ENCODE measurements at regions of chr17 and their contacts with region 1.

Region 1: DNA sequence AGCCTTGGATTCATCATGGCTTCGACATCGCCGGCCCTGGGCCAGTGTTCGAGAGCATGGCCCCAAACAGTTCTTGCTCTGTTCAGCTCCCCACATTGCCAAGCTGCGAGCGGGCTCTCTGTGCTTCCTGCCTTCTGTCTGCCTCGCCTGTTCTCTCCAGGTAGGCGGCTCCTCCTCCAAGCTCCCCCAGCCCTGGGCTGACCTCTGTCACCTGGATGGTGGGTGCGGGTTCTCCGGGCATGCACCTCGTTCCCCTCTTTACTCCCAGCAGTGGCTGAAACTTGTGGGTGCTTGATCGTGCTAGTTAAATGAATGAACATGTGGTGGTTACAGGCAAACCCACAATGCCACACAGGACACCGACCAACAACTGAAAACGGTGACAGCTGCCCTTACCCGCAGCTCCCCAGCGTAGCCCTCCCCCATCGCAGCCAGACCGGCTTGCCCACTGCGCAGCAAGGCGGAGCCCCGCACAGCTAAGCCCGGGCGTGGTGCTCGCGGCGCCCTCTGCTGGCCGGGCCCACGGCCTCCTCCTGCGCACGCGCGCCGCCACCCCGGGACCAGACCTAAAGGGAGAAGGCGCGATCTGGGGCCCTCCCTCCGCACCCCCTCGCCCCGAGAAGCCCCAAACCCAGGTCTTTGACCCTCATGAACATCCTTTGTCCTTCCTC is 23.0 kb upstream of the EIF1 start:
- DNase-seq: peak; percentile 86
- ATAC-seq: peak; percentile 78
- H3K4me3 ChIP-seq: peak overlapping the region; percentile 64
- H3K27ac ChIP-seq: peak overlapping the region; percentile 42
- H3K4me1 ChIP-seq: peaks cover 25% of the 10 kb centered on the region
- H3K27me3 ChIP-seq: no peaks in the 10 kb centered on the region
- CTCF ChIP-seq: peak; percentile 84

Region 2: DNA sequence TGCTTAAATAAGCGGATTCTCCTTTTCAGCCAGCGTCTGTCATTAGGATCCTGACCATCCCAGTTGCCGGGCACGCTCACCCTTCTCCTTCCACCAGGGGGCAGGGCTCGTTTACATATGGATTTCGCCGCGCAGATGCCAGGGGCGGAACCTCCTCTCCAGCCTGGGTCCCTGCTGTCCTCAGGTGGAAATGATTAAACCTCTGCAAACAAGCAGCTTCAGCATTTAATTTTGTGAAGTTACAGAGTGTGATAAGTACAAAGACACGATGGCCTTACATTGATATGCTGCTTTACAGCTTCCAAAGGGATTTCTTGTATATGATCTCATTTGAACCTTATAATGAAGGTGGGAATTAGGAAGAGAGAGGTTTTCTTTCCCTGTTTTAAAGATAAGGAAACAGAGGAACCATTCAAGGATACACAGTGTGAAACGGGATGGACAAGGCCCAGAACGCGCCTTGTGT is 862.1 kb before region 1 on chr17:
- CTCF ChIA-PET with region 1: interaction called, 4 read pairs
- POLR2A ChIA-PET with region 1: no interaction called
- intact Hi-C with region 1: loop called (anchors 2 kb)
- DNase-seq: peak; percentile 82
- ATAC-seq: peak; percentile 85
- H3K4me3 ChIP-seq: no peak overlapping the region
- H3K27ac ChIP-seq: peak overlapping the region; percentile 31; the same call in 1 of the 2 replicates
- H3K4me1 ChIP-seq: peaks cover 8% of the 10 kb centered on the region
- H3K27me3 ChIP-seq: no peaks in the 10 kb centered on the region
- CTCF ChIP-seq: peak; percentile 86

Region 3: DNA sequence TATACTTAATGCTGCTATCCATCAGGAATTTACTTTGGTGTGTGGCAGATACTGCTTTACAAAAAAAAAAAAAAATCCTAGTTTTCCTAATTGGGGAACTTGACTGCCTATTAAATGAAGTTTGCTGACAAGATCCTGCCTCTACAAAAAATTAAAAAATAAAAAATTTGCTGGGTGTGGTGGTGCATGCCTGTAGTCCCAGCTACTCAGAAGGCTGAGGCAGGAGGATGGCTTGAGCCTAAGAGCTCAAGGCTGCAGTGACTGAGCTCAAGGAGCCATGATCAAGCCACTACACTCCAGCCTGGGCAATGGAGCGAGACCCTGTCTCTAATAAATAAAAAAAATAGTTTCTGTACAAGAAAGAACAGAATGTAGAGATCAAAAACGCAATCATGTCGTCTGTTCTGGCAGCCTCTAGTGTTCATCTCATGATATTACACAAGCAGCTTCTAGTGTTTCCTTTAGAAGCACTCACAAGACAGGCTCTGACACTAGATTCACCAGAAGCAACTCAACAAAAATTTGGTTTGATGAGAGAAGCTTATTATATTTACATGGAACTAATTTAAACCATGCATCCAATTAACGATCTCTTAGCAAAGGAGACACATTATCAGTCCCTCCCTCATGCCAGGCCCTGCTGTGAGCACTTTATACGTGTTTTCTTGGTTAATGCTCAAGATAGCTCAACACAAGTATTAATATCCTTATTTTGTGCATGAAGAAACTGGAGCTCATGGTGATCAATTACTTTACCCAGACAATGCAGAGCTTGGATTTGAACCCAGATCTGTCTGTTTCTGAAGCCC is 343.4 kb before region 1 on chr17:
- CTCF ChIA-PET with region 1: no interaction called
- POLR2A ChIA-PET with region 1: no interaction called
- intact Hi-C with region 1: loop called (anchors 10 kb)
- DNase-seq: peak; percentile 65
- ATAC-seq: peak; percentile 68; the same call in 1 of the 2 replicates
- H3K4me3 ChIP-seq: no peak overlapping the region
- H3K27ac ChIP-seq: no peak overlapping the region
- H3K4me1 ChIP-seq: no peaks in the 10 kb centered on the region
- H3K27me3 ChIP-seq: no peaks in the 10 kb centered on the region
- CTCF ChIP-seq: peak; percentile 69

Region 4: DNA sequence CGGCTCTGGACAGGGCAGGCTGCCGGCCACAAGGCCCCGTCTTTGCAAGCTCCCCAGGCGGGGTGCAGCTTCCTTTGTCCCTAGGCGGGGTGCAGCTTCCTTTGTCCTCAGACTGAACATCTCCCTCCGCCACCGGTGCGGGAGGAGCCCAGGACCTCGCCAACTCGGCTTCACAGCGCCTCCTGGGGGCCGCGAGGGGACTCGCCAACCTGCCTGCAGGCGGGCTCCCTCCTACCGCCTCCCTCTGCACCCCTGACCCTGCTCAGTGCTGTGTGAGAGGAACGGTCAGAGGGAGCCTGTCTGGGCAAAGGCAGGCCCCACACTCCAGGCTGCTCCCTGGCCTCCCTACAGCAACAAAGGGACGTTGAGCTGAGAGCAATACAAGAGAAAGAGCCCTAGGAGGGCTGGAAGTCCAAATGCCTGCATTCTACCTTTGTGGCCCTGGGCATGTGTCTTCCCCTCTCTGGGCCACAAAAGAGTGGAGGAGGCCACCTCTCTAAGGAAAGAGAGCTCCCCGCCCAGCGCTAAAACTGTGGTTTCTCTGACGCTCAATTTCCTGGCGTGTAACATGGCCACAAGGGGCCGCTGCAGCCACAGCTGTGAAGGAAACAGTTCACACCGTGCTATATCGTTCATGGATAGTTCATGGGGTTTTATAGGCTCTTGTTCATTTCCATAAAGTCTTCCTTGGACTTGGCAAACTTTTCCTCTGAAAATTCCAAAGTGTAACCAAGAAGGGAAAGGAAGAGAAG is 116.7 kb before region 1 on chr17:
- CTCF ChIA-PET with region 1: interaction called, 38 read pairs
- POLR2A ChIA-PET with region 1: no interaction called
- intact Hi-C with region 1: loop called (anchors 1 kb)
- DNase-seq: peak; percentile 91
- ATAC-seq: peak; percentile 59
- H3K4me3 ChIP-seq: peak overlapping the region; percentile 50; the same call in 1 of the 2 replicates
- H3K27ac ChIP-seq: peak overlapping the region; percentile 98
- H3K4me1 ChIP-seq: peaks cover 50% of the 10 kb centered on the region
- H3K27me3 ChIP-seq: no peaks in the 10 kb centered on the region
- CTCF ChIP-seq: peak; percentile 81

Region 5: DNA sequence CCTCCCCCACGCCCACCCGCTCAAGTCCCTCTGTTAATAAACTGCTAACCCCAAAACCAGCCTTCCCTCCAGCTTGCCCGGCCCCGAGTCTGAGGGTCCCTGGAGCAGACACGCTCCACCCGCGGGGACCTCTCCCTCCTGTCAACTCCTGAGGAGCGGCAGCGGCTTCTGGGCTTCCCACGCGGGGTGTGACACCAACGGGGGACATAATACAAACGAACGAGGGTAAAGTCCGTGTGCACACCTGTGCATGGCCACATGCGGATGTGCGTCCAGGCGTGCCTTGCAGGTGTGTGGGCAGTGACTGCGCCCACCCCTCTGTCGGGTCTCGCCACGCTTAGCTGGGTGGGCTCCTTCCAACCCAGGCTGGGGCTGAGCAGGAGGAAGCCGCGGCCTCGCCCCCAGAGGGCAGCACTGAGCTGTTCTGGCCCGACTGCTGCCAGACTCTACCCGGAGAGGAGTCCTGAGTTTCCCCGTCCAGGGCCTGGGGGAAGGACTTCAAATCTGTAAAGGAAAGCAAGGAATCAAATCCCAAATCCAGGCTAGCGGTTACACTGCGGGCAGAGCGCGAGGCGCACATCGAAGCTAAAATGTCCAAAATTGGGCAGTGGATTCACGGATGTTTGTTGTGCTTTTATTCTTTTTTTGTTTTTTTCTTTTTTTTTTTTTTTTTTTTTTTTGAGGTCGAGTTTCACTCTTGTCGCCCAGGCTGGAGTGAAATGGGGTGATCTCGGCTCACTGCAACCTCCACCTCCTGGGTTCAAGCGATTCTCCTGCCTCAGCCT is 17.1 kb before region 1 on chr17:
- CTCF ChIA-PET with region 1: interaction called, 24 read pairs
- POLR2A ChIA-PET with region 1: interaction called, 6 read pairs
- intact Hi-C with region 1: loop called (anchors 1 kb)
- DNase-seq: peak; percentile 78
- ATAC-seq: peak; percentile 86
- H3K4me3 ChIP-seq: peak overlapping the region; percentile 72
- H3K27ac ChIP-seq: peak overlapping the region; percentile 65
- H3K4me1 ChIP-seq: peaks cover 11% of the 10 kb centered on the region
- H3K27me3 ChIP-seq: no peaks in the 10 kb centered on the region
- CTCF ChIP-seq: peak; percentile 81

Region 6: GRCh38 chr17:41678907-41679739 is 13.4 kb after region 1 on chr17:
- CTCF ChIA-PET with region 1: no interaction called
- POLR2A ChIA-PET with region 1: no interaction called
- intact Hi-C with region 1: no loop called
- DNase-seq: peak; percentile 40
- ATAC-seq: peak; percentile 64
- H3K4me3 ChIP-seq: peak overlapping the region; percentile 46
- H3K27ac ChIP-seq: peak overlapping the region; percentile 78
- H3K4me1 ChIP-seq: peaks cover 13% of the 10 kb centered on the region
- H3K27me3 ChIP-seq: no peaks in the 10 kb centered on the region
- CTCF ChIP-seq: peak; percentile 24; the same call in 1 of the 2 replicates

Region 7: GRCh38 chr17:41786227-41787020 is 120.7 kb after region 1 on chr17 and contains the start of gene JUP:
- CTCF ChIA-PET with region 1: no interaction called
- POLR2A ChIA-PET with region 1: no interaction called
- intact Hi-C with region 1: no loop called
- DNase-seq: peak; percentile 98
- ATAC-seq: peak; percentile 97
- H3K4me3 ChIP-seq: peak within 1 kb of the TSS; percentile 88
- H3K27ac ChIP-seq: peak within 1 kb of the TSS; percentile 88
- H3K4me1 ChIP-seq: peaks cover 22% of the 10 kb centered on the region
- H3K27me3 ChIP-seq: no peaks in the 10 kb centered on the region
- CTCF ChIP-seq: peak; percentile 60
- total RNA-seq, gene JUP: 132 and 168 TPM in 2 replicates

Measured in PC-3 (cell line).